Endothelial cell of umbilical vein (primary cell): ENCODE measurements at regions of chr9 and their contacts with region 1.

Region 1: DNA sequence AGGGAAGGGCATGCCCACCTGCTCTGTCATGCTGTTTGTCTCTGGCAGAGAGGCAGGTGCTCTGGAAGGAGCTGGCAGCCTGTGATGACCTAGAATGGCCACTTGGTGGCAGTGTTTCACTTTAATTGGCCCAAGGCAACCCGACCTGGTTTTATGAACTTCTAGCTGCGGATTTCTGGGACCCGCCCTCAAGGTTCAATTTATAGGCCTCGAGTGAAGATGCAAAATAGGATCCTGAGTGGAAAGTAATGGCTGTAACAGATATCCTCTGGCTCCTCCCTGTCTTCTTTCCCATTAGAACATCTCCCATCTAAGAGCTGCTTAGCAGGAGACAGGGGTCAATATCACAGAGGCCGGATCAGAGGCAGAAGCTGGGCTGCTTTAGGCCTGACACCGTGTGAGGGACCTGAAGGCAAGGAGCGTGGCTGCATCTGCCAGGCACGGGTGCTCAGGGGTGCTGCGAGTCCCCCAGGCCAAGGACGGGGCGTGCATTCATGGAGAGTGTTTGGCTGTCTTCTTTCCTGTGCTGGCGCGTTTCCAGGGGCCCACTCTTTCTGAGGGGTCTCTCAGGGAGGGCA is 56.7 kb upstream of the SLC28A3 start:
- DNase-seq: peak; percentile 69
- H3K4me3 ChIP-seq: no peak overlapping the region
- H3K27ac ChIP-seq: no peak overlapping the region
- H3K4me1 ChIP-seq: peaks cover 8% of the 10 kb centered on the region
- H3K27me3 ChIP-seq: no peaks in the 10 kb centered on the region
- CTCF ChIP-seq: peak; percentile 66 to 81
- POLR2A ChIP-seq: no peak

Region 2: GRCh38 chr9:84668196-84669012 is 271.2 kb after region 1 on chr9:
- CTCF ChIA-PET with region 1: interaction called, 6 read pairs
- POLR2A ChIA-PET with region 1: no interaction called
- dilution Hi-C with region 1: no loop called
- intact Hi-C with region 1: loop called (anchors 2 kb)
- DNase-seq: peak; percentile 52
- H3K4me3 ChIP-seq: peak overlapping the region in 2 of 3 experiments; percentile 29 to 40
- H3K27ac ChIP-seq: no peak overlapping the region
- H3K4me1 ChIP-seq: peaks cover 15% of the 10 kb centered on the region
- H3K27me3 ChIP-seq: peaks cover 32 to 62% of the 10 kb centered on the region in 2 experiments
- CTCF ChIP-seq: peak; percentile 59 to 60
- POLR2A ChIP-seq: no peak

Region 3: DNA sequence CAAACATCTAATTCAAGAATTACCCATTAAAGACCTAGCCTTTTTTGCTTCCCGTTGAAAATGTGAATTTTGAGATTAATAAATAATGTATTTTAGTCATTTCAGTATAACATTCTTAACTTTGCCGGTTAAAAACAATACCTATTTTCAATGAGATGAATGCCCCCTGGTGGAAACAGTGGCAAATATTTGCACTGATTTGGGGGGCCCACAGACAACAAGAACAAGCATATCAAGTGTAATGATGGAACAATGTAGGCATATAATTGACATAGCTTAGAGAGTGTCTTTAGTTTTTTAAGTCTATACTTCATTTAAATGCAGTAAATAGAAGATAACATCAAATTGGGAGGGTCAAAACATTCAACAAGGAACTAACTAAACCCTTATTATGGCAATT is 384.2 kb after region 1 on chr9:
- CTCF ChIA-PET with region 1: interaction called, 23 read pairs
- POLR2A ChIA-PET with region 1: no interaction called
- dilution Hi-C with region 1: no loop called
- intact Hi-C with region 1: loop called (anchors 1 kb)
- DNase-seq: peak; percentile 33
- H3K4me3 ChIP-seq: no peak overlapping the region
- H3K27ac ChIP-seq: no peak overlapping the region
- H3K4me1 ChIP-seq: peaks cover 7% of the 10 kb centered on the region
- H3K27me3 ChIP-seq: no peaks in the 10 kb centered on the region
- CTCF ChIP-seq: peak; percentile 30
- POLR2A ChIP-seq: no peak

Region 4: DNA sequence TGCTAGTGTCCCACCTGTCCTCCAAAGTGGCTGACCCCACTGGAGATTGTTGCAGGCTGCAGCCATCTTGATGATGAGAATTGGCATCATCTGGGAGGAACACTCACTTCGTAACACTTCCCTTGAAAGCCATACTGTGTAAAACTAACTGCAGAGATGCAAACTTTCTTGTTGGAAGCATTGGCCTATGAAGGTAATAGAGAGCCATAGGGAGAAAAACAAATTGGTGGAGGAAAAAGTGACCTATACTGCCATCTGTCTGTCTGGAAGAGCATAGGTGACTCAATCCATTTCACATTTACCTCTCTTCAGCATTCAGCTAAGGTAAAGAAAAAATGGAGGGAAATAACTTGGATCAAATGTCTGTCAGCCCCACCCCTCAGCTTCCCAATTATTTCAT is 745.7 kb after region 1 on chr9:
- CTCF ChIA-PET with region 1: interaction called, 37 read pairs
- POLR2A ChIA-PET with region 1: interaction called, 7 read pairs
- dilution Hi-C with region 1: no loop called
- intact Hi-C with region 1: loop called (anchors 5 kb)
- DNase-seq: peak; percentile 9
- H3K4me3 ChIP-seq: no peak overlapping the region
- H3K27ac ChIP-seq: no peak overlapping the region
- H3K4me1 ChIP-seq: no peaks in the 10 kb centered on the region
- H3K27me3 ChIP-seq: peaks cover 0 to 3% of the 10 kb centered on the region in 2 experiments
- CTCF ChIP-seq: peak in 1 of 2 donors; percentile 45
- POLR2A ChIP-seq: no peak

Region 5: GRCh38 chr9:85425153-85425611 is 1027.9 kb after region 1 on chr9:
- CTCF ChIA-PET with region 1: interaction called, 43 read pairs
- POLR2A ChIA-PET with region 1: no interaction called
- dilution Hi-C with region 1: no loop called
- intact Hi-C with region 1: loop called (anchors 1 kb)
- DNase-seq: peak; percentile 84
- H3K4me3 ChIP-seq: no peak overlapping the region
- H3K27ac ChIP-seq: no peak overlapping the region
- H3K4me1 ChIP-seq: peaks cover 26% of the 10 kb centered on the region
- H3K27me3 ChIP-seq: no peaks in the 10 kb centered on the region
- CTCF ChIP-seq: peak; percentile 74 to 78
- POLR2A ChIP-seq: no peak

Region 6: DNA sequence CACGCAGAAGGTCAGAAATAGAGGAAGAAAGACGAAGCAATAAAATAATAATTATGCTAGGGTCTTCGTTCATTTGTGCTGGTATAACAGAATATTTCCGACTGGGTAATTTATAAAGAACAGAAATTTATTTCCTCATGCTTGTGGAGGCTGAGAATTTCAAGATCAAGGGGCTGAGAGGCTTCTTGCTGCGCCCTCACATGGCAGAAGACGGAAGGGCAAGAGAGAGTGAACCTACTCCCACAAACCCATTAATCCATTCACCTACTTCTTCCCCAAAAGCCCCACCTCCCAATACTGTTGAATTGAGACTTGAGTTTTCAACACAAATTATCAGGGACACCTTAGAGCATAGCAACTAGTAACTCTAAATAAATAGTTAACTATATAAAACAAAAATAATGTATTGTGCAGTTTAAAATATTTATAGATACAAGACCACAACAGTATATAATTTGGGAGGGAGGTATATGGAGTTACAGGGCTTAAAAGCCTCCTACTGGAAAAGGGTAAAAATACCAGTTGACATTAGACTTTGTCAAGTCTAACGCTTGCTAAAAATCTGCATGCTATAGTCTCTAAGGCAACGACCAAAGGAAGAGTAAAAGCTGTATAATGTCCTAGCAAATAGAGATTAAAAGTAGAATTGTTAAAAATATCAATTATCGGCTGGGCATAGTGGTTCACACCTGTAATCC is 1503.4 kb after region 1 on chr9:
- CTCF ChIA-PET with region 1: interaction called, 28 read pairs
- POLR2A ChIA-PET with region 1: no interaction called
- dilution Hi-C with region 1: no loop called
- intact Hi-C with region 1: no loop called
- DNase-seq: peak; percentile 54
- H3K4me3 ChIP-seq: no peak overlapping the region
- H3K27ac ChIP-seq: no peak overlapping the region
- H3K4me1 ChIP-seq: no peaks in the 10 kb centered on the region
- H3K27me3 ChIP-seq: peaks cover 0 to 2% of the 10 kb centered on the region in 2 experiments
- CTCF ChIP-seq: peak; percentile 50 to 79
- POLR2A ChIP-seq: no peak